ENCODE measurements at regions of chr13 and their contacts with region 1.

Region 1: GRCh38 chr13:40597740-40598370 is 68.6 kb downstream of the FOXO1 start:
- DNase-seq: no peak
- H3K4me3 ChIP-seq: no peak overlapping the region
- H3K27ac ChIP-seq: no peak overlapping the region
- H3K27me3 ChIP-seq: no peaks in the 10 kb centered on the region
- CTCF ChIP-seq: no peak

Region 2: GRCh38 chr13:39875111-39875987 is 722.5 kb before region 1 on chr13:
- CTCF ChIA-PET with region 1: no interaction called
- POLR2A ChIA-PET with region 1: no interaction called
- DNase-seq: no peak
- H3K4me3 ChIP-seq: no peak overlapping the region
- H3K27ac ChIP-seq: no peak overlapping the region
- H3K27me3 ChIP-seq: no peaks in the 10 kb centered on the region
- CTCF ChIP-seq: no peak

Region 3: DNA sequence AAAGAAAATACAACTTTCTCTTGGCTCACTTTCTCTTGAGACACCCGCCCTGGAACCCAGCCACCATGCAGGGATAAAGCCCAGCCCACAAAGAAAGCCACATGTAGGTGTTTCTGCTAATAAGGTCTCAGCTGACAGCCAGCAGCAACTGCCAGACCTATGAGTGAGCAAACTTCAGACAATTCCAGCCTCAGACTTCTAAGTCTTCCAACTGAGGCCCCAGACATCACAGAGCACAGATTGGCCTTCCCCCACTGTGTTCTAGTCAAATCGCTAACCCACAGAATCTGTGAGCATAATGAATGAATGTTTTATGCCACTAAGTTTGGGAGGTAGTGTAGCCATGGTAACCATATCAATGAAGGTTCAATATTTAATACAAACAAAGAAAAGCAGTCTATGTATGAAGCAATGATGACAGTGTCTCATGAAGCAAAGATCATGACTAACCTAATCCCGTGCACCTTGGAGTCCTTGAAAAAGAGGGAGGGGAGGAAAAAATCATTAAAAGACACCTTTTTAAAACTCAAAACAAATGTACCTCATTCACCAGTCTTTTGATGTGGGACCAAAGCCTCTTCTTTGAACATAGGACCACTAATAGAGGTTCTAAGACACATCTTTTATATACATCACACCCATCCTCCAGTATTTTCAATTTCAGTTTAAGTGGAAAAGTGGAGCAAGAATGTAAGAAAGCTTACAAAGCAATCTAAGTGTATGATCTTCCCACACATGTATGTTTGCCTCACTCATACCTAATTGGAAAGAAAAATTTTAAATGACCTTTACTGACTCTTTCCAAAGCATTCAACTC is 166.9 kb after region 1 on chr13:
- CTCF ChIA-PET with region 1: no interaction called
- POLR2A ChIA-PET with region 1: interaction called, 10 read pairs
- DNase-seq: no peak
- H3K4me3 ChIP-seq: no peak overlapping the region
- H3K27ac ChIP-seq: no peak overlapping the region
- H3K27me3 ChIP-seq: no peaks in the 10 kb centered on the region
- CTCF ChIP-seq: no peak